Panc1 (cell line): ENCODE measurements at regions of chr9 and their contacts with region 1.

Region 1: DNA sequence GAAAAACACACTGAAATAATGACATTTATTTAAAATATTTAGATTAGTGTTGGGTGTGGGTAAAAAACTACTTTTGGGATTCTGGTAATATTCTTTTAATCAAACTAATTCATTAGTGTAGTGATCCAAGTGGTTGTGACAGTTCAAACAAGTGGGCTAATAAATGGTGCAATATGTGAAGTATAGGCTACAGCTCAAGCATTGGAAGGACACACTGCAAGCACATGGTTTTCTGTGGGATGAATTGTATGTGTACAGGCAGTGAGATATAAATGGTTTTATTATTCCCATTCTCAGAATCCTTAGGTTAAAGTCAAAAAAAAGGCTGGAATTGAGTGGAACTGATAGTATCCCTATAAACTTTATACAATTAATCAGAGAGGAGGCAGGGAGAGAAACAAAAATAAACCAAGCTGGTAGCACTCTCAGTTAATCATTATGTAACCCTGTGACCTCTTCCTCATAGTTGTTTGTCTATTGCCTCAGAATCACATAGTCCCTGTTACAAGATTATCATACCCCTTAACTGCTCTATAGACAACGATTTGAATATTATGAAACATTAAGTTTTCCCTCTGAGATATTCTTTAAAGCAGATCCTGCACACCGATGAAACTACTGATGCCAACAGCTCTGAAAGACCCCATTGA is 1755.4 kb upstream of the ACO1 start:
- DNase-seq: no peak
- ATAC-seq: no peak
- H3K4me3 ChIP-seq: no peak overlapping the region
- H3K27ac ChIP-seq: no peak overlapping the region
- H3K4me1 ChIP-seq: no peaks in the 10 kb centered on the region
- H3K27me3 ChIP-seq: no peaks in the 10 kb centered on the region
- CTCF ChIP-seq: no peak

Region 2: DNA sequence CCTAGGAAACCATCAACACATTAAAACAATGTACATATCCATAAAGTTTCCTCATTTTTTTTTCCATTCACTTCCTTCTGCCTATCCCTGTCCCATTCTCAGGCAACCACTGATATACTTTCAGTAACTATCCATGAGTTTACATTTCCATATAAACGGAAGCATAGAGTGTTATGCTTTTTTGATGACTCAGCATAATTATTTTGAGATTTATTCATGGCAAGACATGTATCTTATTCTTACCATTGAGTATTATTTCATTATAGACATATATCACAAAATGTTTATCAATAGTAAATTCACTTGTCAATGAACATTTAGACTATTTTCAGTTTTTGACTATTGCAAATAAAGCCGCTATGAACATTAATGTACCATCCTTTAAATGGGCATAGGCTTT is 31.4 kb before region 1 on chr9:
- CTCF ChIA-PET with region 1: no interaction called
- POLR2A ChIA-PET with region 1: no interaction called
- in situ Hi-C with region 1: no loop called
- intact Hi-C with region 1: no loop called
- DNase-seq: no peak
- ATAC-seq: no peak
- H3K4me3 ChIP-seq: no peak overlapping the region
- H3K27ac ChIP-seq: no peak overlapping the region
- H3K4me1 ChIP-seq: no peaks in the 10 kb centered on the region
- H3K27me3 ChIP-seq: no peaks in the 10 kb centered on the region
- CTCF ChIP-seq: no peak

Region 3: GRCh38 chr9:31372799-31373587 is 744.0 kb after region 1 on chr9:
- CTCF ChIA-PET with region 1: no interaction called
- POLR2A ChIA-PET with region 1: no interaction called
- in situ Hi-C with region 1: no loop called
- intact Hi-C with region 1: loop called (anchors 5 kb)
- DNase-seq: no peak
- ATAC-seq: no peak
- H3K4me3 ChIP-seq: no peak overlapping the region
- H3K27ac ChIP-seq: no peak overlapping the region
- H3K4me1 ChIP-seq: no peaks in the 10 kb centered on the region
- H3K27me3 ChIP-seq: no peaks in the 10 kb centered on the region
- CTCF ChIP-seq: no peak